ENCODE measurements at regions of chr12 and their contacts with region 1.

Region 1: DNA sequence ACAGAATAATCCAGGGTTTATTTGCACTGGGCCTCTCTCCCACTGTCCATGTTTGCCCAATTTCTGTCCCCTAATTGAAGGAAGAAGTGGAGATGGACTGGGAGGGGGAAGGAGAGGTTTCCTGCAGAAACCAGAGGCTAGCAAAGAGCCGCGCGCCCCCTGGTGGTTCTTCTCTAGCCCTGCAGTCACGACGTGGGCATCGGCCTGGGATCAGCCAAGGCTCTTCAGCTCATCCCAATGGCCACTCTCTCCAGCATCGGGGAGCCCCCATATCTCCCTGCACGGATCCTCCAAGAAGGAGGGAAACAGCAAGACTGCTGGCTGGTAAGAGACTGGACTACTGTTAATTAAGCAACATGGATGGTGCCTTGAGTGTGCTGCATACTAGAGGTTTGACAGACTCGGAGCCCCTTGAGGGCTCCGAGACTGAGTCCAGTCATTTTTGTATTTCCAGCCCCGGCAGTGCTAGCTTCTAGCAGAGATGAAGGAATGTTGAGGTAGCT is 18.7 kb downstream of the ZBTB39 start:
- DNase-seq: peak; percentile 81 to 91 (median 82)
- ATAC-seq: peak; percentile 82
- H3K4me3 ChIP-seq: peak overlapping the region; percentile 3; the same call in 1 of the 2 replicates
- H3K27ac ChIP-seq: peak overlapping the region; percentile 62
- H3K4me1 ChIP-seq: peaks cover 29 to 54% of the 10 kb centered on the region in 2 experiments
- H3K27me3 ChIP-seq: no peaks in the 10 kb centered on the region
- CTCF ChIP-seq: peak; percentile 91 to 96 (median 93)
- EP300 ChIP-seq: no peak
- POLR2A ChIP-seq: no peak
- RAD21 ChIP-seq: peak; percentile 97 to 99

Region 2: DNA sequence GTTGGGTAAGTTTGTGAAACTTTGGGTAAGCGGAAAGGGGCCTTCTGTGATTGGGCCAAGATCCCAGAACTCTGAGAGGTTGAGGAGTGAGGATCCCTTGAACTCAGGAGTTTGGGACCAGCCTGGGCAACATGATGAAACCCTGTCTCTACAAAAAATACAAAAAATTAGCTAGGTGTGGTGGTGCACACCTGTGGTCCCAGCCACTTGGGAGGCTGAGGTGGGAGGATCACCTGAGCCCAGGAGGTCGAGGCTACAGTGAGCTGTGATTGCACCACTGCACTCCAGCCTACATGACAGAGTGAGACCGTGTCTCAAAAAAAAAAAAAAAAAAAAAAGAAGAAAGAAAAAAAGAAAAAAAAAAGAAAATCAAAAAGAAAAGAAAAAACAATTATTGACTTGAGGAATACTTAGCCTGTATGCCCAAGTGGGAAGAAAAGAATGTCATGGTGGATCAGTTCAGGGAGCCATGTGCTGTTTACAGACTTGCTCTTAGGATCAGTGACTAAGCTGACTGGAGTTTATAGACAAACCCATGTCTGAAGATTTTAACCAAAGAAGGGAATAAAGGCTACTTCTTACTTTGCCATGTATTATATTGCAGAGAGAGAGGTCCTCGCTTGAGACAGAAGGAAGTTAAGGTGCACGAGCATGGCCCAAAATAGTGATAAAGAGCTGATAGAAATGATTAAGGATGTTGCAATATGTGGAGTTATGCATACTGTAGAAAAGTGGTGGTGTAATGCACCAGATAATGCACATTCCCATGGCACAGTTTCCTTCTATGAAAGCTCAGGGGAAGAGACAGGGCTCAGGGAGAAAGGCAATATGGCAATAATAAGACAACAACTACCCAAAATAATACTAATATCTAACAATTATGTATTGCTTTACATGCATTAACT is 223.6 kb before region 1 on chr12:
- CTCF ChIA-PET with region 1: interaction called, 3 read pairs
- POLR2A ChIA-PET with region 1: no interaction called
- in situ Hi-C with region 1: no loop called
- intact Hi-C with region 1: loop called (anchors 5 kb)
- DNase-seq: no peak
- ATAC-seq: no peak
- H3K4me3 ChIP-seq: no peak overlapping the region
- H3K27ac ChIP-seq: no peak overlapping the region
- H3K4me1 ChIP-seq: no peaks in the 10 kb centered on the region
- H3K27me3 ChIP-seq: no peaks in the 10 kb centered on the region
- CTCF ChIP-seq: no peak
- EP300 ChIP-seq: no peak
- POLR2A ChIP-seq: no peak
- RAD21 ChIP-seq: no peak

Region 3: GRCh38 chr12:56921346-56921745 is 66.3 kb before region 1 on chr12:
- CTCF ChIA-PET with region 1: no interaction called
- POLR2A ChIA-PET with region 1: no interaction called
- in situ Hi-C with region 1: no loop called
- intact Hi-C with region 1: no loop called
- DNase-seq: no peak
- ATAC-seq: no peak
- H3K4me3 ChIP-seq: no peak overlapping the region
- H3K27ac ChIP-seq: no peak overlapping the region
- H3K4me1 ChIP-seq: no peaks in the 10 kb centered on the region
- H3K27me3 ChIP-seq: no peaks in the 10 kb centered on the region
- CTCF ChIP-seq: no peak
- EP300 ChIP-seq: no peak
- POLR2A ChIP-seq: no peak
- RAD21 ChIP-seq: no peak

Region 4: GRCh38 chr12:56931474-56931978 is 56.1 kb before region 1 on chr12:
- CTCF ChIA-PET with region 1: no interaction called
- POLR2A ChIA-PET with region 1: no interaction called
- in situ Hi-C with region 1: no loop called
- intact Hi-C with region 1: loop called (anchors 5 kb)
- DNase-seq: peak; percentile 70 to 92 (median 74)
- ATAC-seq: peak; percentile 93
- H3K4me3 ChIP-seq: peak overlapping the region; percentile 24; the same call in 1 of the 2 replicates
- H3K27ac ChIP-seq: peak overlapping the region; percentile 82
- H3K4me1 ChIP-seq: peaks cover 34 to 46% of the 10 kb centered on the region in 2 experiments
- H3K27me3 ChIP-seq: no peaks in the 10 kb centered on the region
- CTCF ChIP-seq: no peak
- EP300 ChIP-seq: peak; percentile 90
- POLR2A ChIP-seq: no peak; the same call in 1 of the 2 replicates
- RAD21 ChIP-seq: peak in 1 of 2 experiments; percentile 23; a peak in 1 of 4 replicates

Region 5: DNA sequence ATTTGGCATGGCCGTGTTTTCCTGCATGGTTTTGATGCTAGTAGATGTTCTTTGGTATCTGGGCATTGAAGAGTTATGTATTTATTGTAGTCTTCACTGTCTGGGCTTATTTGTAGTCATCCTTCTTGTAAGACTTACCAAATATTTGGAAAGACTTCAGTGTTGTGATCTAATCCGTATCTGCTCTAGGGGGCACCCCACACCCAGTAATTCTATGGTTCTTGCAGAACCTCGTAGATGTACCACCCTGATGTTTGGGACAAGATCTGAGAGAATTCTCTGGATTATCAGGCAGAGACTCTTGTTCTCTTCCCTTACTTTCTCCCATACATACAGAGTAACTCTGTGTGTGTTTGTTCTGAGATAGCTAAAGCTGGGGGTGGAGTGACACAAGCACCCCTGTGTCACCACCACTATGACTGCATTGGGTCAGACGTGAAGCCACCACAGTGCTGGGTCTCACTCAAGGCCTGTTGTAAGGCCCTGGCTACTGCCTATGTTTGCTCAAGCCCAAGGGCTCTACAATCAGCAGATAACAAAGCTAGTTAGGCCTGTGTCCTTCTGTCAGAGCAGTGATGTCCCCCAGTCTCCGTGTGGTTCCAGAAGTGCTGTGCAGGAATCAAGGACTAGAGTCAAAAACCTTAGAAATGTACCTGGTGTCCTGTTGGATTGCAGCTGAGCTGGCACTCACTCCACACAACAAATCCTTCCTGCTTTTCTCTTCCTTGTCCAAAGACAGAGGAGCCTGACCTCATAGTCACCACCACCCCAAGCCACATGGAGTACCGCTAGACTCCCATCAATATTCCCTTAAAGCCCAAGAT is 39.8 kb before region 1 on chr12:
- CTCF ChIA-PET with region 1: no interaction called
- POLR2A ChIA-PET with region 1: interaction called, 4 read pairs
- in situ Hi-C with region 1: loop called (anchors 5 kb)
- intact Hi-C with region 1: loop called (anchors 1 kb)
- DNase-seq: peak in 2 of 4 experiments; percentile 27 to 50
- ATAC-seq: peak; percentile 84
- H3K4me3 ChIP-seq: no peak overlapping the region
- H3K27ac ChIP-seq: no peak overlapping the region; the same call in 2 of the 3 replicates
- H3K4me1 ChIP-seq: no peaks in the 10 kb centered on the region; a peak in 4 of 5 replicates
- H3K27me3 ChIP-seq: no peaks in the 10 kb centered on the region
- CTCF ChIP-seq: peak; percentile 26 to 56 (median 54); a peak in 5 of 6 replicates
- EP300 ChIP-seq: no peak
- POLR2A ChIP-seq: no peak
- RAD21 ChIP-seq: peak; percentile 36 to 78; a peak in 3 of 4 replicates

Region 6: GRCh38 chr12:57195611-57196371 is 208.2 kb after region 1 on chr12:
- CTCF ChIA-PET with region 1: no interaction called
- POLR2A ChIA-PET with region 1: no interaction called
- in situ Hi-C with region 1: no loop called
- intact Hi-C with region 1: no loop called
- DNase-seq: peak in 3 of 4 experiments; percentile 43 to 47 (median 46)
- ATAC-seq: peak; percentile 79
- H3K4me3 ChIP-seq: no peak overlapping the region
- H3K27ac ChIP-seq: no peak overlapping the region
- H3K4me1 ChIP-seq: peaks cover 0 to 67% of the 10 kb centered on the region in 2 experiments; a peak in 2 of 5 replicates
- H3K27me3 ChIP-seq: peaks cover 65 to 98% of the 10 kb centered on the region in 2 experiments; a peak in 4 of 5 replicates
- CTCF ChIP-seq: peak; percentile 29 to 59 (median 32); a peak in 4 of 6 replicates
- EP300 ChIP-seq: no peak
- POLR2A ChIP-seq: no peak
- RAD21 ChIP-seq: peak in 1 of 2 experiments; percentile 31; a peak in 1 of 4 replicates

Measured in K562 (cell line).